HEK293 (cell line): ENCODE measurements at regions of chr14 and their contacts with region 1.

Region 1: GRCh38 chr14:67526676-67527459 is 6.2 kb upstream of the PLEKHH1 start:
- H3K4me3 ChIP-seq: no peak overlapping the region
- H3K27ac ChIP-seq: no peak overlapping the region
- H3K4me1 ChIP-seq: peaks cover 6% of the 10 kb centered on the region
- CTCF ChIP-seq: peak; percentile 70

Region 2: GRCh38 chr14:67514650-67515385 is 12.1 kb before region 1 on chr14:
- CTCF ChIA-PET with region 1: interaction called, 32 read pairs
- POLR2A ChIA-PET with region 1: no interaction called
- H3K4me3 ChIP-seq: peak overlapping the region; percentile 61
- H3K27ac ChIP-seq: peak overlapping the region; percentile 57; the same call in 1 of the 2 replicates
- H3K4me1 ChIP-seq: no peaks in the 10 kb centered on the region
- CTCF ChIP-seq: no peak

Region 3: DNA sequence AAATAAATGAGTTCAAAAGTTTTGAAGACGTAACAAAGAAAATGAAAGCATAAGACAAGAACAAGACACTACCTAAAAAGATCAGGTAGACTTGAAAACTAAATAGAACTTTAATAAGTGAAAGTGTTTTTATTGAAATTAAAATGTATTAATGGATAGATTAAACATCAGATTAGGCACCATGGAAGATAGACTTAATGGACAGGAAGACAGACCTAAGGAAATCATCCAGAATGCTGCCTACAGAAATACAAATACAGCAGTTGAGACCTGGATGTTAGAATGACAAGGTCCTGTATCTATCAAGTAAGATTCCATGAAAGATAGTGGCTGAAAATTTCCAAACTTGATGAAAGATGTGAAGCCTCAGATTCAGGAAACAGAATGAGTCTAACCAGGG is 17.7 kb after region 1 on chr14:
- CTCF ChIA-PET with region 1: interaction called, 33 read pairs
- POLR2A ChIA-PET with region 1: no interaction called
- H3K4me3 ChIP-seq: no peak overlapping the region
- H3K27ac ChIP-seq: no peak overlapping the region
- H3K4me1 ChIP-seq: no peaks in the 10 kb centered on the region
- CTCF ChIP-seq: no peak

Region 4: GRCh38 chr14:67571272-67571850 is 44.5 kb after region 1 on chr14:
- CTCF ChIA-PET with region 1: interaction called, 143 read pairs
- POLR2A ChIA-PET with region 1: interaction called, 5 read pairs
- H3K4me3 ChIP-seq: no peak overlapping the region
- H3K27ac ChIP-seq: no peak overlapping the region
- H3K4me1 ChIP-seq: no peaks in the 10 kb centered on the region
- CTCF ChIP-seq: peak; percentile 62

Region 5: DNA sequence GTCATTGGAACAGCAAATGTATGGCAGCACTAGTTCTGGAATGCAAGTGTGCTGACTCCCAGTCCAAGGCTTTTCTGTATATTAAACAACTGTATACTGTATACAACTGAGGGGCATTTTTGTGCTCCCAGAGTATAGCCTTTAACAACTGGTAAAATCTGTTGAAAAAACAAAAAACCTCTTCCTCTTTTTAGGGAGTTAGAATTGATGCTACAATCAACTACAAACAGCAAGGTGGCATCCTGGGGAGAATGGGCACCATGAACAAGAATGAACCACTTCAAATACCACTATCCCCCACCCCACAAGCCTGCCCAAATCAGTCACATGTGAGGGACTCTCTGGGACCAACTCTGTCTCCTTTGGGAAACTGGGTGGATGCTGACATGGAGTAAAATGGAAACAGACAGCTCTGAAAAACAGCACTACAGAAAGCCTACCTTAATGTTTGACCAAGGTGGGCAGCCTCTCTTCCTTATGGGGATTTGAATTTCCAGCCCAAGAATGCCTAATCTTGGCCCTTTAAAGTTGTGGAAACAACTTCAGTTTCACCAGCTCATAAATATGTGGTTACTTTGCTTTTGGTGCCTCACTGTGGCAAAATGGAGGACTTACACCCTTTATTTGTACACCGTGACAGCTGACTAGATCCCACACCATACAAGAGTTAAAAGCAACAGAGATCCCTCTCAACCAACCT is 140.0 kb after region 1 on chr14:
- CTCF ChIA-PET with region 1: interaction called, 21 read pairs
- POLR2A ChIA-PET with region 1: interaction called, 5 read pairs
- H3K4me3 ChIP-seq: no peak overlapping the region
- H3K27ac ChIP-seq: no peak overlapping the region
- H3K4me1 ChIP-seq: peaks cover 5% of the 10 kb centered on the region; the same call in 1 of the 2 replicates
- CTCF ChIP-seq: peak; percentile 11; the same call in 1 of the 2 replicates

Region 6: DNA sequence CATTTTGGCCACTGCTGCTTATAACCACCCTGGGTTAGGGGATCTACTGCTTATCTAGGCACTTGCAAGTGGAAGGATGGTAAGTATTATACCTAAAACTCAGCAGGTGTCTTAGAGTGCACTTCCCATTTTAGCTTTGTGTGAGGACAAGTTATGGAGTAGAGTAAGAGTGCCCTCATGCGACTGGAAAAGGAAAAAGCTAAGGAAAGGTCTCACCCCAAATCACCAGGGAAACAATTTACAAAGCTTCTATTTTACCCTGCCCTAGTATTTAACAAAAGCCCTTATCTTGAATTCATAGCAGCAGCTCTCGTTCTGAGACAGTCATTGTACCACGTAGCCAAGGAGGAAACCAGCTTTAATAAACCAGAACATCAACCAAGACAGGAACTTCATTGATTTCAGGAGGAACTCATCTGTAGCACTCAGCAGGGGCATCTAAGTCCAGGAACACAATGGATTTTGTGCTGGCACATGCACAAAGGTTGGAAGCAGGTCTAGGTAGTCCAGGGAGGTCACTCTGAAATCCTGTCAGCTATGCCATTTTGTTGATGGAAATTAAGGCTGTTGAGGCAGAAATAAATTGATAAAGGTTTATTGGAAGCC is 177.7 kb after region 1 on chr14:
- CTCF ChIA-PET with region 1: interaction called, 49 read pairs
- POLR2A ChIA-PET with region 1: no interaction called
- H3K4me3 ChIP-seq: no peak overlapping the region
- H3K27ac ChIP-seq: no peak overlapping the region
- H3K4me1 ChIP-seq: no peaks in the 10 kb centered on the region
- CTCF ChIP-seq: peak; percentile 54

Region 7: GRCh38 chr14:67806246-67806645 is 279.4 kb after region 1 on chr14:
- CTCF ChIA-PET with region 1: no interaction called
- POLR2A ChIA-PET with region 1: no interaction called
- H3K4me3 ChIP-seq: no peak overlapping the region
- H3K27ac ChIP-seq: no peak overlapping the region
- H3K4me1 ChIP-seq: no peaks in the 10 kb centered on the region
- CTCF ChIP-seq: no peak